ENCODE measurements at regions of chr19 and their contacts with region 1.

Region 1: GRCh38 chr19:13033819-13034611 is 38.7 kb downstream of the NFIX start:
- DNase-seq: no peak
- H3K4me3 ChIP-seq: no peak overlapping the region
- H3K27me3 ChIP-seq: no peaks in the 10 kb centered on the region
- CTCF ChIP-seq: peak; percentile 84

Region 2: DNA sequence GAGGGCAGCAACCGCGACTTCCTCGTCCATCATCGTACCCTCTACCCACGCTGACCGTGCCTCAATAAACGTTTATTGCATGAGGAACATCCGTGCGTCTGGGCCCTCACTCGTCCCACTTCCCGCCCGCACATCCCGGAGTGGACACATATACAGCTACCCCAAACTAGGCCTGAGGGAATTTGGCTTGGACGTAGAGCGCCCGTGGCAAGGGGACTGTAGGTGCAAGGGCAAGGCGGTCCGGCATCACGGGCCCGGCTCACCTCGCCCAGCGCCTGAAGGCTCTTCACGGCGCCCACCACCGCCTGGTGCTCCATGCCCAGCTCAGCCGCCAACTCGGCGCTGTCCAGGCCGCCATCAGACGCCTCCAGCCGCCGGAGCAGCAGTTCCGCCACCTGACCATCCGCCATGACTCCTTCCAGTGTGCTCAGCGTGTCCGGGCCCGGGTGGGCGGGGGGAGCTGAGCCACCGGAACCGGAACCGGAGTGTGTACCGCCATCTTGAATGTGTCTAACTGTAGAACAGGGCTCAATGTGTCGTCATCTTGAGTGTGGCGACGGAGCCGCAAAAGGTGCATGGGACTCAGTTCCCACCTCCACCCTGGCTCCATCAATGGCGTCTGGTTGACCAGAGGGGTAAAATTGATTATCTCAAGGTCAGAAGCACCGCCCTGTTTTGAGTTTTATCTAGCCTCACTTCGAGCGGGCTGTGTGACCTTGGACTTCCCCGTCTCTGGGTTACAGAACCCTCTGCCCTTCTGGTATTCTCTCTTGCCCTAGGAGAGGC is 100.5 kb before region 1 on chr19 and contains the start of gene FARSA:
- CTCF ChIA-PET with region 1: no interaction called
- POLR2A ChIA-PET with region 1: no interaction called
- DNase-seq: no peak
- H3K4me3 ChIP-seq: peak within 1 kb of the TSS; percentile 94
- H3K27me3 ChIP-seq: no peaks in the 10 kb centered on the region
- CTCF ChIP-seq: no peak
- polyA plus RNA-seq, gene FARSA: 15.5 and 33.6 TPM in 2 replicates

Region 3: GRCh38 chr19:12974301-12975220 is 59.5 kb before region 1 on chr19:
- CTCF ChIA-PET with region 1: interaction called, 13 read pairs
- POLR2A ChIA-PET with region 1: no interaction called
- DNase-seq: no peak
- H3K4me3 ChIP-seq: no peak overlapping the region
- H3K27me3 ChIP-seq: no peaks in the 10 kb centered on the region
- CTCF ChIP-seq: no peak

Region 4: DNA sequence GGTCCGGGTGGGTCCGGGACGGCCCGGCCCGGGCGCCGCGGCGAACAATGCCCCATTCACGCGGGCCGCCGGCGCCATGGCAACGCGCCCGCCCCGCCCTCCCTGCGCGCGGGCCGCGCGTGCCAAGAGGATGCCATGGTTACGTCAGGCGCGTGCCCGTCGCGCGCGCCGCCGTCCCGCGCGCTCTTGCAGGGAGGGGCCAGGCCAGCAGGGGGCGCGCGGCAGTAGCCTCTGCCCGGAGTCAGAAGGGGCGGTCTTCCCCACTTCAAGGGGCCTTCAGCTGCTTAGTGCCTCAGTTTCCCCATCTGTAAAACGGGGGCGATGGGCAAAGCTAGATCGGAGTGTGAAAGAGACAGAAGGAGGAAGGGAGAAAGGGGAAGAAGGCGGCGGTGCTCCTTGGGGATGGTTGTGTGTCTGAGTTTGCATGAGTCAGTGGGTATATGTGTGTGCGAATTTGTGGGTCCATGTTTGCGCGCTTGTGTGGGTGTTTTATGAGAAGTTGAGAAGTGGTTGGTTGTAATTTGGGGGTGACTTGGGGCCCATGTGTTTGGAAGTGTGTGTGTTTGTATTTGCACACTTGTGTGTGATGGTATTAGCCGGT is 50.4 kb before region 1 on chr19:
- CTCF ChIA-PET with region 1: interaction called, 14 read pairs
- POLR2A ChIA-PET with region 1: no interaction called
- DNase-seq: no peak
- H3K4me3 ChIP-seq: peak overlapping the region; percentile 39
- H3K27me3 ChIP-seq: no peaks in the 10 kb centered on the region
- CTCF ChIP-seq: peak; percentile 71

Region 5: DNA sequence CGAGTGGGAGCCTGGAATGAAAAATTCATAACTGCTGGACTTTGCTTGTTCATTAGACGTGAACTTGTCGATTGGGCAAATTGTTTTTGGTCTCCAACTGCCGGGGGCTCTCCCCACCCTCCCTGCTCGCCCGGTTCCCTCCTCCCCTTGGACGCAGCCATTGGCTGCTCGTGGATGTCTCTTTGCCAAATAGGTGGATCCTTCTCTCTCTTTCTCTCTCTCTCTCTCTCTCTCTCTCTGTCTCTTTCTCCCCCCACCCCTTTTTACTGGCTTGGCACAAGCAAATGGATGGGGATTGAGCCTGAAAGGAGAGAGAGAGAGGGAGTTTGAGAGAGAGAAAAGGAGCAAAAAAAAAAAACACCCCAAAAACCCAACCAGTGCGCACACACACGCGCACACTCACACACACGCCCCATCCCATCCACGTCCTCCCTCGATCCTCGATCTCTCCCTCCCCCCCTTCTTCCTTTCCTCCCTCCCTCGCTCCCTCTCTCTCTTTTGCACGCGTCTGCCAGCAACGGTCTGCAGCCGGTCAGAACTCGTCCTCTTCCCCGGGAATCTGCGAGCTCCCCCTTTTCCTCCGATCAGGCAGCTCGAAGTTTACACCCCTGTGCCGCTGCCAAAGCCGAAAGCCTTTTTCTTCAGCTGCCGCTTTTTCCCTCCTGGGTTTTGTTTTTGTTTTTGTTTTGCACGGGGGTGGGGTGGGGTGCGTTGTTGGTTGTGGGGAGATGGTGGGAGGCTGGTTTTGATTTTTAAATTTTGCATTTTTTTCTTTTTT is 11.0 kb before region 1 on chr19:
- CTCF ChIA-PET with region 1: interaction called, 10 read pairs
- POLR2A ChIA-PET with region 1: interaction called, 5 read pairs
- DNase-seq: peak; percentile 89
- H3K4me3 ChIP-seq: peak overlapping the region; percentile 43
- H3K27me3 ChIP-seq: no peaks in the 10 kb centered on the region
- CTCF ChIP-seq: no peak

Region 6: GRCh38 chr19:13044231-13044836 is 10.3 kb after region 1 on chr19:
- CTCF ChIA-PET with region 1: interaction called, 13 read pairs
- POLR2A ChIA-PET with region 1: no interaction called
- DNase-seq: no peak
- H3K4me3 ChIP-seq: no peak overlapping the region
- H3K27me3 ChIP-seq: no peaks in the 10 kb centered on the region
- CTCF ChIP-seq: no peak

Measured in BJ (cell line).